ENCODE measurements at regions of chr14 and their contacts with region 1.

Region 1: GRCh38 chr14:92039719-92040430 is at the start of gene TRIP11:
- DNase-seq: peak; percentile 95
- ATAC-seq: peak; percentile 96
- H3K4me3 ChIP-seq: peak within 1 kb of the TSS; percentile 66 to 90 (median 87)
- H3K4me3 Mint-ChIP-seq: peak within 1 kb of the TSS; percentile 93
- H3K27ac ChIP-seq: peak within 1 kb of the TSS; percentile 85 to 93
- H3K27ac Mint-ChIP-seq: peak within 1 kb of the TSS; percentile 94
- H3K4me1 ChIP-seq: peaks cover 19 to 24% of the 10 kb centered on the region in 2 donors
- H3K4me1 Mint-ChIP-seq: peaks cover 40% of the 10 kb centered on the region
- H3K27me3 ChIP-seq: no peaks in the 10 kb centered on the region
- H3K27me3 Mint-ChIP-seq: no peaks in the 10 kb centered on the region
- CTCF ChIP-seq: no peak
- total RNA-seq, gene TRIP11: 62.2 and 69.9 TPM in 2 replicates

Region 2: GRCh38 chr14:91413547-91414474 is 626.1 kb before region 1 on chr14:
- CTCF ChIA-PET with region 1: no interaction called
- POLR2A ChIA-PET with region 1: no interaction called
- intact Hi-C with region 1: no loop called
- DNase-seq: no peak
- ATAC-seq: no peak
- H3K4me3 ChIP-seq: peak overlapping the region in 1 of 5 experiments; percentile 2
- H3K4me3 Mint-ChIP-seq: peak overlapping the region; percentile 96
- H3K27ac ChIP-seq: peak overlapping the region; percentile 48 to 91
- H3K27ac Mint-ChIP-seq: peak overlapping the region; percentile 94
- H3K4me1 ChIP-seq: peaks cover 72 to 80% of the 10 kb centered on the region in 2 donors
- H3K4me1 Mint-ChIP-seq: peaks cover 66% of the 10 kb centered on the region
- H3K27me3 ChIP-seq: no peaks in the 10 kb centered on the region
- H3K27me3 Mint-ChIP-seq: no peaks in the 10 kb centered on the region
- CTCF ChIP-seq: no peak

Region 3: GRCh38 chr14:92026548-92027190 is 13.2 kb before region 1 on chr14:
- CTCF ChIA-PET with region 1: no interaction called
- POLR2A ChIA-PET with region 1: no interaction called
- intact Hi-C with region 1: no loop called
- DNase-seq: peak; percentile 19
- ATAC-seq: no peak
- H3K4me3 ChIP-seq: no peak overlapping the region
- H3K4me3 Mint-ChIP-seq: no peak overlapping the region
- H3K27ac ChIP-seq: no peak overlapping the region
- H3K27ac Mint-ChIP-seq: no peak overlapping the region
- H3K4me1 ChIP-seq: no peaks in the 10 kb centered on the region
- H3K4me1 Mint-ChIP-seq: peaks cover 8% of the 10 kb centered on the region
- H3K27me3 ChIP-seq: no peaks in the 10 kb centered on the region
- H3K27me3 Mint-ChIP-seq: no peaks in the 10 kb centered on the region
- CTCF ChIP-seq: no peak

Region 4: DNA sequence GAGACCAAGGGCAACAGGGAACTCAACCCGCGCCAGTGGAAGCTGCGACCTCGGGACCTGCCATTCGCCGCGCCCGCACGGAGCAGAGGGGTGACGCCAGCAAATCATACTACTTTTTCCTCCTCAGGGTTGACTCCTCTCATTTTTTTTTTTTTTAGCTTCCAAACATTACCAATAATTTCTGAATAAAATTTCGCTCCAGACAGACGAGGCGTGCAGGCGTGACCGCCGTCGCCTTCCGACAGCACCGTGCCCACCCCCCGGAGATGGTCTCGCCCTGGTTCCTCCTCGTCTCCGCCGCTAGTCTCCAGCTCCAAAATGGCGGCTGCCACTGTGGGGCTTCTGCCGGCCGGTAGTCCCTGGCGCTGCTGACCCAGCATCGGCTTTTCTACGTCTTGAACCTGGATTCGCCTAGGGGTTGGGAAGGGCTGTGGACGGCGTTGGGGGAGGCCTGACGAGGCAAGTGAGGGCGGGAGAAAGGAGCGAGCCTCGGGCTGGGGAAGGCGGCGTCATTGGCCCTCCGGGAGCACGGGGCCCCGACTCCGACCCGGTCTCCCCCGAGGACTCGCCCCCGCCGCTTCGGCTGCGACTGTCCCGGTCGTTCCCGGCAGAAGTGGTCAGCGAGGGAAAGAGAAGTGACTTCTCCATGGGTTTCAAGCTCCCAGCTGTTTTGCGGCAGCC is 81.9 kb after region 1 on chr14 and contains the starts of genes CPSF2 and NDUFB1:
- CTCF ChIA-PET with region 1: interaction called, 4 read pairs
- POLR2A ChIA-PET with region 1: interaction called, 7 read pairs
- intact Hi-C with region 1: loop called (anchors 1 kb)
- DNase-seq: peak; percentile 94
- ATAC-seq: peak; percentile 89
- H3K4me3 ChIP-seq: peak within 1 kb of the TSS; percentile 85 to 99 (median 90)
- H3K4me3 Mint-ChIP-seq: peak within 1 kb of the TSS; percentile 97
- H3K27ac ChIP-seq: peak within 1 kb of the TSS; percentile 87 to 96
- H3K27ac Mint-ChIP-seq: peak within 1 kb of the TSS; percentile 100
- H3K4me1 ChIP-seq: peaks cover 9 to 29% of the 10 kb centered on the region in 2 donors
- H3K4me1 Mint-ChIP-seq: peaks cover 38% of the 10 kb centered on the region
- H3K27me3 ChIP-seq: no peaks in the 10 kb centered on the region
- H3K27me3 Mint-ChIP-seq: no peaks in the 10 kb centered on the region
- CTCF ChIP-seq: no peak
- total RNA-seq, gene CPSF2: 42.6 and 46.1 TPM in 2 replicates
- total RNA-seq, gene NDUFB1: 61.6 and 63.7 TPM in 2 replicates

Region 5: DNA sequence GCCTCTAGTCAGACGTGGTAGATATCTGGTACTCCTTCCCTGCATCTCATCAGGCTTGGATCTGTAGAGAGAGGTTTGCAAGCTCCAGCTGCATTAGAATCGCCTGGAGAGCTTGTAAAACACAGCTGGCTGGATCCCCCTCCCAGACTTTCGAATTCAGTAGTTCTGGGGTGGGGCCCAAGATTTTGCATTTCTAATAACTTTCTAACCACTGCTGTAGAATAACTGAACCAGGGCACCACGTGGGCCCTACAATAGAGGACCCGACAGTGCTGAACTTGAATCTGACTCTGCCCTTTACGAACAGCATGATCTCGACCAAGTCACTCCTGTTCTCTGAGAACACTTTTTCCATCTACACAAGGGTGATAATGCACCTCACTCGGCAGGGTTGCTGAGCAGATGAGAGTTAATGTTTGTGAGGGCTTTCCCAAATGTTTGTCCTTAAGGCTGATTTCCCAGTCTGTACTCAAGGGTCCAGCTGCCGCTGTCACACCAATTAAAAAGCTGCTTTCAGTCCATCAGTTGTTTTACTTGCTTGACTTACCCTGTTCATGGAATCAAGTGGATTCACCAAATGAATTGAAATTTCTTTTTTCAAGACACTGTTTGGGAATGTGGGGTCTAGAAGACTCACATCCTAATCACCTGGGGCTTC is 196.5 kb after region 1 on chr14:
- CTCF ChIA-PET with region 1: no interaction called
- POLR2A ChIA-PET with region 1: no interaction called
- intact Hi-C with region 1: no loop called
- DNase-seq: no peak
- ATAC-seq: no peak
- H3K4me3 ChIP-seq: no peak overlapping the region
- H3K4me3 Mint-ChIP-seq: no peak overlapping the region
- H3K27ac ChIP-seq: no peak overlapping the region
- H3K27ac Mint-ChIP-seq: no peak overlapping the region
- H3K4me1 ChIP-seq: no peaks in the 10 kb centered on the region
- H3K4me1 Mint-ChIP-seq: no peaks in the 10 kb centered on the region
- H3K27me3 ChIP-seq: peaks cover 0 to 13% (median 1%) of the 10 kb centered on the region in 4 experiments
- H3K27me3 Mint-ChIP-seq: peaks cover 30% of the 10 kb centered on the region
- CTCF ChIP-seq: no peak

Measured in B cell (primary cell).